Endothelial cell of umbilical vein (primary cell): ENCODE measurements at regions of chr2 and their contacts with region 1.

Region 1: GRCh38 chr2:165500816-165501215 is 31.3 kb downstream of the CSRNP3 start:
- DNase-seq: no peak
- H3K4me3 ChIP-seq: no peak overlapping the region
- H3K27ac ChIP-seq: no peak overlapping the region
- H3K4me1 ChIP-seq: no peaks in the 10 kb centered on the region
- H3K27me3 ChIP-seq: no peaks in the 10 kb centered on the region
- CTCF ChIP-seq: no peak
- POLR2A ChIP-seq: no peak

Region 2: DNA sequence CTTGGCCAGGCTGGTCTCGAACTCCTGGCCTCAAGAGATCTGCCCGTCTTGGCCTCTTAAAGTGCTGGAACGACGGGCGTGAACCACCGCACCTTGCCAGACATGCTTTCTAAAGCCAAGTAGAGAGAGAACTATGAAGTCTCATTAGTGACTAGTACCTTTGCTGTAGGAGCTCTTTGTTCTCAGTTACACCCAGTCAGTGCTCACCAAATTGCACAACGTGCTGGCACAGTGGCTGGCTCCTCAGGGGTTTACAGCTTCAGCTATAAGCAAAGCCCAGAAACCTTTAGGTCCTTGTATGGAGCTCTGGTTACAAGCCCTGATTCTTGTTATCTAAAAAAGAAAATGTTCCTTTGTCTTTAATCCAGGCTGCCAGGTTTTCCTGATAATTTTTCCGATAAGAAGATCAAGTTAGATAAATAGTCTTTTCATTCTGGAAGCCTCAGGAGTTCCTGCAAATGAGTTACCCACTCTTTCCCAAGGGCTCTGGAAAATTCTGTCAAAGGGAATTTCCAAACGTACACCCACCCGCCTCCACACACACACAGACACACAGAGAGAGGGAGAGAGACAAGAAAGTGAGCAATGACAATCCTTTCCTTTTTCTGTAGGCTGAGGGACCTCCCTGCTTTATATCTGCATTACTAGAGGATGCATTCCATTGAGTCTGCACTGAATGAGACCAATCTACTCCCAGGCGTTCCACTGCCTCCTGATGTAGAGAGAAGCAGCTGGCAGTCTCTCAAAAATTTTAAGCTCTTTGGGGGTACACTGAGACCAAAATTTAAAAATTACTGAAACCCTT is 131.5 kb before region 1 on chr2:
- CTCF ChIA-PET with region 1: no interaction called
- POLR2A ChIA-PET with region 1: no interaction called
- dilution Hi-C with region 1: no loop called
- intact Hi-C with region 1: no loop called
- DNase-seq: peak; percentile 47
- H3K4me3 ChIP-seq: no peak overlapping the region
- H3K27ac ChIP-seq: no peak overlapping the region
- H3K4me1 ChIP-seq: no peaks in the 10 kb centered on the region
- H3K27me3 ChIP-seq: no peaks in the 10 kb centered on the region
- CTCF ChIP-seq: no peak
- POLR2A ChIP-seq: no peak

Region 3: GRCh38 chr2:165479856-165480255 is 21.0 kb before region 1 on chr2:
- CTCF ChIA-PET with region 1: no interaction called
- POLR2A ChIA-PET with region 1: no interaction called
- dilution Hi-C with region 1: no loop called
- intact Hi-C with region 1: loop called (anchors 2 kb)
- DNase-seq: no peak
- H3K4me3 ChIP-seq: no peak overlapping the region
- H3K27ac ChIP-seq: no peak overlapping the region
- H3K4me1 ChIP-seq: no peaks in the 10 kb centered on the region
- H3K27me3 ChIP-seq: peaks cover 0 to 2% of the 10 kb centered on the region in 2 experiments
- CTCF ChIP-seq: no peak
- POLR2A ChIP-seq: no peak

Region 4: DNA sequence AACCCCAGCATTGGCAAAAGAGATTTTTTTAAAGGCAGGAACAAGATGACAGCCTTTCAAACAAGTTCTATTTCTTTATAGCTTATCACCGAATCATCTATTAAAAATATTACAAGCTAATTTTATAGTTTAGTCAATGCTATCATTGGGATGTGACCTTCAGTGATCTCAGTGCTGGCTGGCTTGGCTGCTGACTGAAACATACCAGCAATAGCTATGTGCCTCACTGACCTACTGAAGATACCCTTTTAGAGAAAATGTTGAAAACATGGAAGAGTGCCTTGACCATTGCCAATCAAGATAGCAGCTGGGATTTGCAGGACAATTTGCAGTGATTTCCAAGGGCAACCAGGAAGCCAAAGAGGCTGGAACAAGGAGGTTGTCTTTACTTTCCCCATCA is 12.7 kb after region 1 on chr2:
- CTCF ChIA-PET with region 1: no interaction called
- POLR2A ChIA-PET with region 1: no interaction called
- dilution Hi-C with region 1: no loop called
- intact Hi-C with region 1: no loop called
- DNase-seq: no peak
- H3K4me3 ChIP-seq: no peak overlapping the region
- H3K27ac ChIP-seq: no peak overlapping the region
- H3K4me1 ChIP-seq: no peaks in the 10 kb centered on the region
- H3K27me3 ChIP-seq: no peaks in the 10 kb centered on the region
- CTCF ChIP-seq: no peak
- POLR2A ChIP-seq: no peak